Activated T-helper 2 cell treated with anti-CD3 and anti-CD28 coated beads, Interferon-gamma antibody, Interleukin-2, Interleukin-4, amounts not matched to agents 10 μg/mL and 5 μg/mL and 100 μg/mL, durations not matched to agents 14 hours and 24 hours and 36 hours (primary cell): ENCODE measurements at regions of chr11 and their contacts with region 1.

Region 1: DNA sequence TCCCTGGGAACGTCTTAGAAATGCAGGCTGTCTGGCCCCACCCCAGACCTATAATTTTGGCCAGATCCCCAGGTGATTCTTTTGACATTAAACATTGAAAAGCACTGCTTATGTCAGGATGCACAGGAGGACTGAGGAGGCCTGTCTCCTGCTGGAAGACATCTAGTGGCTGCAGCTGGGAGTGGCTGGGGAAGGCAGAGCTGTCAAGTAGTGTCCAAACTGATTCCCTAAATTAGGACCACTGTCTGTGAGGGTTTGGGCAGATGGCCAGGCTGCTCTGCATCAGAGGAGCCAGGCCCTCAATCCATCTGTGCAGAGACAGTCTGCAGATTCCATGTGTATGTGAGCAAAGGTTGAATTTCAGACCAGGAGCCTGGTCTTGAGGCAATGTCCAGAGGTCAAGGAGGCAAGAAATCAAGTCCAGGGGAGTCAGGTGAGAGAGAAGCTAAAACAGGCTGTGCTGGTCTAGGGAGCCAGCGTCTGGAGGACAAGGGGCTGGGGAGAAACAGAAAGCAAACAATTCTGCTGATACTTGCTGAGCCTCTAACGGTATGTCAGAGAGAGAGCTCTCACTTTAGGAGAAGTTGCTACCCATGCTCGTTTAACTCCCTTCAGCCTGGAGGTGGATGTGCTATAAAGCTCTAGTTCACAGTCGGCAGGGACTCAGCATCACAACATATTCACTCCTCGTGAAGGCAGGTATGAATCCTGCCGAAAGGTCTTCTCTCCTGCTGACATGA is 15.3 kb upstream of the SYTL2 start:
- DNase-seq: no peak
- H3K4me3 Mint-ChIP-seq: no peak overlapping the region
- H3K27ac Mint-ChIP-seq: peak overlapping the region; percentile 62
- H3K4me1 Mint-ChIP-seq: peaks cover 67% of the 10 kb centered on the region
- H3K27me3 Mint-ChIP-seq: no peaks in the 10 kb centered on the region

Region 2: DNA sequence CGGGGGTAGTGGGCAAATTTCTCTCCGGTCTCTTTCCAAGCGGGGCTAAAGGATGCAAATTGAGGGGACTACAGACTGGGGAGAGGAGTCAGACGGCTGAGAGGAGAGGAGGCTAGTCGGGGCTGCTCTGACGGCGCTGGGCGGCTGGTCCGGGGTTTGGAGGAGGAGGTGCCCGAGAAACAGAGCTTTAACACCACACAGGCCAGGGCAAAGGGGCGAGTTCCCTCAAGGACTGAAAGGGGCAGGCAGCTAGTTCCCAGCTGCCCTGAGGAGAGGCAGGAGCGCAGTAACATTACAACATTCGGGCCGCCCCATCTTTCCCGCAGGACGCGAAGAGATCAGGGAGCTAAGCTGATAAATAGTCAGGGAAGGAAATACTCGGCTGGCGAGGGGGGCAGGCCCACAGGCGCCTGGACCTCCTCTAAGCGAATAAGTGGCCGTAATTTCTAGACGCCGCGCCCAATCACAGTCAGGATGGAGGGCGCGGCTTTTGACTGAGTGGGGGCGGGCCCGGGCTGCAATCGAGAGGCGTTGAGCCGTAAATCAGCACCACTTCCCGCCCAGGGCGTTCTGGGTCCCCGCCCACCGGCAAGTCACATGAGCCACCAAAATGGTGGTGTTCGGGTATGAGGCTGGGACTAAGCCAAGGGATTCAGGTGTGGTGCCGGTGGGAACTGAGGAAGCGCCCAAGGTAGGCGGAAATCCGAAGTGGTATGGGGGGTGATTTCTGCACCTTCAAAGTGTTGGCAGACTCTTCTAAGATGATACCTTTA is 198.1 kb before region 1 on chr11 and contains the start of gene TMEM126B:
- intact Hi-C with region 1: loop called (anchors 1 kb)
- DNase-seq: peak; percentile 95
- H3K4me3 Mint-ChIP-seq: peak within 1 kb of the TSS; percentile 89
- H3K27ac Mint-ChIP-seq: peak within 1 kb of the TSS; percentile 88
- H3K4me1 Mint-ChIP-seq: peaks cover 38% of the 10 kb centered on the region
- H3K27me3 Mint-ChIP-seq: peaks cover 2% of the 10 kb centered on the region
- total RNA-seq, gene TMEM126B: 63.8 and 66.5 TPM in 2 replicates

Region 3: GRCh38 chr11:85664615-85665481 is 161.4 kb before region 1 on chr11 and contains the start of gene CREBZF:
- intact Hi-C with region 1: loop called (anchors 1 kb)
- DNase-seq: peak; percentile 94
- H3K4me3 Mint-ChIP-seq: peak within 1 kb of the TSS; percentile 99
- H3K27ac Mint-ChIP-seq: peak within 1 kb of the TSS; percentile 96
- H3K4me1 Mint-ChIP-seq: peaks cover 33% of the 10 kb centered on the region
- H3K27me3 Mint-ChIP-seq: no peaks in the 10 kb centered on the region
- total RNA-seq, gene CREBZF: 47.8 and 49.7 TPM in 2 replicates

Region 4: DNA sequence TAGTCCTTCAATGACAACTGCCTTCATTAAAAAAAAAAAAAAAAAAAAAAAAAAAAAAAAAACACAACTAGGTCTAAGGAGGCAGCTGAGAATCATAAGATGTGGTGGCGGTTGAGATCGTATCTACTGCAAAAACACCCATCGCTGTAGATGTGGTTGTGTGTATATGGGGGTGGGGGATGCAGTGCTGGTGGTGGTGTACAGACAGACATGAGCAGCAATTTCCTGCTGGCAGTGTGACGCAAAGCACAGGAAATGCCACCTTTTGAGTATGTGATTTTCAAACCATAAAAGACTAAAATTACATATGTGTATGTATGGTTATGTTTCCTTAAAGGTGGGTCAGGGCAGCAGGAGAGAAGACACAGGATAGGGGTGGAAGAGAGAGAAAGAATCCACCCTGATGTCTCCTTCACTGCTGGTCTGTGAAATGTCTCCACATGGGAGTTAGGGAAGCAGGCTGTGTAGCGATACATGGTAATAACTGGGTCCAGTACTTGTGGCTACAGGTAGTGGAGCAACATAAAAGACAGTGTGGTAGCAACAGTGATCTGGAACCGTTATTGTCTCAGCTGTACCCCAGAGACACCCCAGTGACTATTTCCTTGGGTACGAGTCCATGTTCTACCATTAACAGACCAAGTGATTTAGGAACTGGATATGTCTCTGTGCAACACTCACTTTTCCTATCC is 73.2 kb before region 1 on chr11:
- intact Hi-C with region 1: loop called (anchors 1 kb)
- DNase-seq: peak; percentile 91
- H3K4me3 Mint-ChIP-seq: peak overlapping the region; percentile 57
- H3K27ac Mint-ChIP-seq: peak overlapping the region; percentile 95
- H3K4me1 Mint-ChIP-seq: peaks cover 89% of the 10 kb centered on the region
- H3K27me3 Mint-ChIP-seq: no peaks in the 10 kb centered on the region

Region 5: GRCh38 chr11:85810871-85811611 is 15.2 kb before region 1 on chr11 and contains the start of gene SYTL2:
- intact Hi-C with region 1: loop called (anchors 1 kb)
- DNase-seq: peak; percentile 74
- H3K4me3 Mint-ChIP-seq: peak within 1 kb of the TSS; percentile 82
- H3K27ac Mint-ChIP-seq: peak within 1 kb of the TSS; percentile 52
- H3K4me1 Mint-ChIP-seq: peaks cover 45% of the 10 kb centered on the region
- H3K27me3 Mint-ChIP-seq: peaks cover 3% of the 10 kb centered on the region
- total RNA-seq, gene SYTL2: 16.0 and 17.3 TPM in 2 replicates

Region 6: GRCh38 chr11:85854557-85855340 is 28.5 kb after region 1 on chr11:
- intact Hi-C with region 1: loop called (anchors 1 kb)
- DNase-seq: peak; percentile 87
- H3K4me3 Mint-ChIP-seq: peak overlapping the region; percentile 84
- H3K27ac Mint-ChIP-seq: peak overlapping the region; percentile 90
- H3K4me1 Mint-ChIP-seq: peaks cover 13% of the 10 kb centered on the region
- H3K27me3 Mint-ChIP-seq: peaks cover 3% of the 10 kb centered on the region

Region 7: DNA sequence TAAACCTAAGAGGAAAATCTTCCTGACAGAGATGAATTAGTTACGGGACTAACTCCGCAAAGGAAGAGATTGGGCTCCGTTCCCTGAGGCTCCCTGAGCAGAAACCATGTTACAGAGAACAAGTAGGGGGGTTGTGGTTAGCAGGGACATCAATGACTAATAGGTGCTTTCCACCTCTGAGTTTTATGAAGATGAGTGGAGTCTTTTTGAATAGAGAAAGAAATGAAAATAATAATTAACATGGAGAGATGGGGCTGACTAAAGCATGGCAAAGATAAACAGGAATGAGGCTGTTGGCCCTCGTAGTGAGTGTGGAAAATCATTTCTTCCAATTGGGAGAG is 290.1 kb after region 1 on chr11:
- intact Hi-C with region 1: loop called (anchors 5 kb)
- DNase-seq: no peak
- H3K4me3 Mint-ChIP-seq: peak overlapping the region; percentile 22
- H3K27ac Mint-ChIP-seq: peak overlapping the region; percentile 83
- H3K4me1 Mint-ChIP-seq: peaks cover 42% of the 10 kb centered on the region
- H3K27me3 Mint-ChIP-seq: no peaks in the 10 kb centered on the region